ENCODE measurements at regions of chr13 and their contacts with region 1.

Region 1: DNA sequence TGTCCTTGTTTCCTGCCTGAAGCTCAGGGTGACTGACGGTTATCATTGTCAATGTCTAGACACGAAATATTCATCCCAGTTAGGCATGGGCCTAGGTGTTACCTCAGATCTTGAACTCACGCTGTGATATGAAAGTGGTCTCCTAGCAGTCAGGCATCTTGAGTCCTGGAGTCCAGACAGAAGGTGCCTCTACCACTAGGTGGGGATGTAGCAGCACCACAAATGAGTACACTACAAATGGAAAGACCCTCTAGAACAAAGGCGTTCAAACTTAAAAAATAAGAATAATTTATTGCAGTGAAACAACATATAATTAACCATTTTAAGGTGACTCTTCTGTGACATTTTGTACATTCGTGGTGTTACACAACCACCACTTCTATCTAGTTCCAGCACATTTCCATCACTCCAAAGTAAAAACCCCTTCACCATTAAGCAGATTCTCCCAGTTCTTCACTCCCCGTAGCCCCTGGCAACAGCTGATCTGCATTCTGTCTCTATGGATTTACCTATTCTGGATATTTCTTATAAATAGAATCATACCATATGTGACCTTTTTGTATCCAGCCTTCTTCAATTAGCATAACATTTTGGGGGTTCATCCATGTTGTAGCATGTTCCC is 11.9 kb upstream of the FRY start:
- DNase-seq: peak; percentile 51
- ATAC-seq: peak; percentile 72
- H3K4me3 Mint-ChIP-seq: no peak overlapping the region
- H3K27ac Mint-ChIP-seq: no peak overlapping the region
- H3K4me1 Mint-ChIP-seq: no peaks in the 10 kb centered on the region
- H3K27me3 Mint-ChIP-seq: no peaks in the 10 kb centered on the region

Region 2: DNA sequence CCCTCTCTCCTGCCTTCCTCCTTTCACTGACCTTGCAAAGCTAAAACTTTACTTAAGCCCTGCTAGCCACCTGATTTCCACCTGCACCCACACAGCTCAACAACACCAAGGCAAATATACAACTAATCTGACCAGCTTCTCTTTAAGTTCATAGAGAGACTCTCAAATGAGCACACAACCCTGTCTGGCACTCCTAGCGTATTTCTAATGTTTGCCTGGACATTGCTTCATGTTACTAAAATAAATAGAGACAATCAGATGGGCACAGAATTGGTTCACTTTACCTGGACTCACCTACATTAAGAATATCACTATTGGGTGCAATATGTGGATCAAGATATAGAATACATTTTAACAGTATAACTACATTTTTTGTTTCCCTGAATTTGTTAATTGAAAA is 313.6 kb before region 1 on chr13:
- CTCF ChIA-PET with region 1: no interaction called
- POLR2A ChIA-PET with region 1: no interaction called
- intact Hi-C with region 1: no loop called
- DNase-seq: no peak
- ATAC-seq: no peak
- H3K4me3 Mint-ChIP-seq: no peak overlapping the region
- H3K27ac Mint-ChIP-seq: no peak overlapping the region
- H3K4me1 Mint-ChIP-seq: no peaks in the 10 kb centered on the region
- H3K27me3 Mint-ChIP-seq: peaks cover 8% of the 10 kb centered on the region

Region 3: GRCh38 chr13:31749929-31750328 is 269.8 kb before region 1 on chr13:
- CTCF ChIA-PET with region 1: no interaction called
- POLR2A ChIA-PET with region 1: no interaction called
- intact Hi-C with region 1: no loop called
- DNase-seq: no peak
- ATAC-seq: no peak
- H3K4me3 Mint-ChIP-seq: no peak overlapping the region
- H3K27ac Mint-ChIP-seq: no peak overlapping the region
- H3K4me1 Mint-ChIP-seq: no peaks in the 10 kb centered on the region
- H3K27me3 Mint-ChIP-seq: peaks cover 6% of the 10 kb centered on the region

Region 4: GRCh38 chr13:32142956-32143375 is 123.2 kb after region 1 on chr13:
- CTCF ChIA-PET with region 1: no interaction called
- POLR2A ChIA-PET with region 1: interaction called, 4 read pairs
- intact Hi-C with region 1: loop called in 1 of 2 experiments (anchors 10 kb)
- DNase-seq: no peak
- ATAC-seq: no peak
- H3K4me3 Mint-ChIP-seq: no peak overlapping the region
- H3K27ac Mint-ChIP-seq: no peak overlapping the region
- H3K4me1 Mint-ChIP-seq: peaks cover 5% of the 10 kb centered on the region
- H3K27me3 Mint-ChIP-seq: no peaks in the 10 kb centered on the region